ENCODE measurements at regions of chr1 and their contacts with region 1.

Region 1: GRCh38 chr1:108691942-108692723 is at the start of gene PRPF38B:
- DNase-seq: peak; percentile 92 to 95 (median 94)
- H3K4me3 ChIP-seq: peak within 1 kb of the TSS; percentile 97
- H3K4me3 Mint-ChIP-seq: peak within 1 kb of the TSS; percentile 91 to 100 (median 93)
- H3K27ac ChIP-seq: peak within 1 kb of the TSS; percentile 96
- H3K27ac Mint-ChIP-seq: peak within 1 kb of the TSS; percentile 91 to 100 (median 98)
- H3K4me1 ChIP-seq: peaks cover 40% of the 10 kb centered on the region
- H3K4me1 Mint-ChIP-seq: peaks cover 39 to 50% (median 45%) of the 10 kb centered on the region in 3 donors
- H3K27me3 ChIP-seq: no peaks in the 10 kb centered on the region
- H3K27me3 Mint-ChIP-seq: no peaks in the 10 kb centered on the region
- total RNA-seq, gene PRPF38B: 74.8 to 78.1 TPM

Region 2: GRCh38 chr1:108643492-108644335 is 48.4 kb before region 1 on chr1:
- CTCF ChIA-PET with region 1: interaction called, 134 read pairs
- POLR2A ChIA-PET with region 1: interaction called, 161 read pairs
- DNase-seq: peak; percentile 21 to 69 (median 59)
- H3K4me3 ChIP-seq: no peak overlapping the region
- H3K4me3 Mint-ChIP-seq: peak overlapping the region in 6 of 7 donors; percentile 2 to 92 (median 44)
- H3K27ac ChIP-seq: no peak overlapping the region
- H3K27ac Mint-ChIP-seq: peak overlapping the region; percentile 95 to 100 (median 98)
- H3K4me1 ChIP-seq: peaks cover 67% of the 10 kb centered on the region
- H3K4me1 Mint-ChIP-seq: peaks cover 73 to 83% (median 82%) of the 10 kb centered on the region in 3 donors
- H3K27me3 ChIP-seq: no peaks in the 10 kb centered on the region
- H3K27me3 Mint-ChIP-seq: no peaks in the 10 kb centered on the region

Region 3: DNA sequence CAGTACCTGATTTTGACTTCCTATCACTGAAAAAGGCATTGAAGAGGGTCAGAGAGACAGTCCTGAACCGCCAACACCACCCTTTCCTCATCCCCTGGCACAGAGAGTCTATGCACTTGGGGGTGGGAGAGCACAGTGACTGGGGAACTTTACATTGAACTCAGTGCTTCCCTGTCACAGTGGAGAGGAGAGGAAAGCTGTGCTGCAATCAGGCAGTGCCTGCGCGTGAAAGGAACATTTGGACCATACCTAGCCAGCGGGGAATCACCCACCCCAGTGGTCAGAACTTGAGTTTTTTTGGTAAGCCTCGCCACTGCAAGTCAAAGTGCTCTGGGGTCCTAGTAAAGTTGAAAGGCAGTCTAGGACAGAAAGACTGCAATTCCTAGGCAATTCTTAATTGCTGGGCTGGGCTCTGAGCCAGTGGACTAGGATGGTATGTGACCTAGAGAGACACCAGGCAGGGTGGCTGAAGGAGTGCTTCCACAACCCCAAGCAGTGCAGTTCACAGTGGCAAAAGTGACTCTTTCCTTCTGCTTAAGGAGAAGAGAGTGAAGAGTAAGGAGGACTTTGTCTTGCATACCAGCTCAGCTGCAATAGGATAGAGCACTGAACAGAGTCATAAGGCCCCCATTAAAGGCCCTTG is 21.9 kb before region 1 on chr1:
- CTCF ChIA-PET with region 1: interaction called, 14 read pairs
- POLR2A ChIA-PET with region 1: interaction called, 4 read pairs
- DNase-seq: no peak
- H3K4me3 ChIP-seq: no peak overlapping the region
- H3K4me3 Mint-ChIP-seq: no peak overlapping the region
- H3K27ac ChIP-seq: no peak overlapping the region
- H3K27ac Mint-ChIP-seq: no peak overlapping the region
- H3K4me1 ChIP-seq: no peaks in the 10 kb centered on the region
- H3K4me1 Mint-ChIP-seq: peaks cover 3 to 9% (median 8%) of the 10 kb centered on the region in 3 donors
- H3K27me3 ChIP-seq: no peaks in the 10 kb centered on the region
- H3K27me3 Mint-ChIP-seq: no peaks in the 10 kb centered on the region

Region 4: GRCh38 chr1:108732398-108732797 is 40.3 kb after region 1 on chr1:
- CTCF ChIA-PET with region 1: no interaction called
- POLR2A ChIA-PET with region 1: no interaction called
- DNase-seq: no peak
- H3K4me3 ChIP-seq: no peak overlapping the region
- H3K4me3 Mint-ChIP-seq: no peak overlapping the region
- H3K27ac ChIP-seq: no peak overlapping the region
- H3K27ac Mint-ChIP-seq: no peak overlapping the region
- H3K4me1 ChIP-seq: no peaks in the 10 kb centered on the region
- H3K4me1 Mint-ChIP-seq: no peaks in the 10 kb centered on the region
- H3K27me3 ChIP-seq: no peaks in the 10 kb centered on the region
- H3K27me3 Mint-ChIP-seq: peaks cover 0 to 27% of the 10 kb centered on the region in 2 donors

Region 5: GRCh38 chr1:108746372-108747205 is 54.5 kb after region 1 on chr1 and contains the start of gene STXBP3:
- CTCF ChIA-PET with region 1: interaction called, 5 read pairs
- POLR2A ChIA-PET with region 1: interaction called, 15 read pairs
- DNase-seq: peak; percentile 99 to 100 (median 100)
- H3K4me3 ChIP-seq: peak within 1 kb of the TSS; percentile 68
- H3K4me3 Mint-ChIP-seq: peak within 1 kb of the TSS; percentile 91 to 99 (median 93)
- H3K27ac ChIP-seq: peak within 1 kb of the TSS; percentile 87
- H3K27ac Mint-ChIP-seq: peak within 1 kb of the TSS; percentile 92 to 100 (median 99)
- H3K4me1 ChIP-seq: peaks cover 29% of the 10 kb centered on the region
- H3K4me1 Mint-ChIP-seq: peaks cover 35 to 46% (median 42%) of the 10 kb centered on the region in 3 donors
- H3K27me3 ChIP-seq: no peaks in the 10 kb centered on the region
- H3K27me3 Mint-ChIP-seq: peaks cover 0 to 5% of the 10 kb centered on the region in 2 donors
- total RNA-seq, gene STXBP3: 43.2 to 43.3 TPM

Region 6: DNA sequence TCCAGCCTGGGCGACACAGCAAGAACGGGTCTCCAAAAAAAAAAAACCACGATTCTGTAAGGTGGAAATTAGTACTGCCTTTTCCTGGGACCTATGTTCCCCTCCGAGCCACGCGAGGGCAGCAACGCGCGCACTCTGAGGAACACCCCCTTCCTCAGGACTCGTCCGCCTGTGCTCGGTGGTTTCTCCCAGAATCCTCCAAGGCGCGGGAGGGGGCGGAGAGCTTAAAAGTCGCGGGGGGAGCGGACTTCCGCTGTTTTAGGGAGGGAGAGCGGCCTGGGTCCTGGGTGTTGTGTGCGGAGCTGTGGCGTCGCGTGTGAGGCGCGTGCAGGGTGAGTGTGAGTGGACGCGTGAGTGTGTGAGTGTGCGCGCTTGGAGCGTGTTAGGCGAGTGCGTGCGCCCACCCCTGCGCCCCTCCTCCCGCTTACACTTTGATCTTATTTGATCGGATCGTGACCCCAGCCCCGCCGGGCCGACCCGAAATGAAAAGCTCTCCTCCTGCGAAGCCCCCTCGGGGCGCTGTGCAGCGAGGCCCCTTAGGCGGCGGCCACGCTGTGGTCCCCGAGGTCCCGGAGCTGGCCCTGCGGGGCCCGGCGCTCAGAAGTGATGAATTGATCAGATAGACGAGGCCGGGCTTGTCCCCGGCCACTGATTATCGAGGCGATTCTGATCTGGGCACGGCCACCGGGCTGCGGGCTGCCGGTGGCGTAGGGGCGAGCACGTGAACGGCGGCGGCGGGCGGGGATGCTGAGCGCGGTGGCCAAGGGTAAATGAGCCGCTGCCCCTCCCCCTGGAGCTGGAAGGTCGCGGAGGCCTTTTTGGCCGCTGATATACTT is 408.0 kb after region 1 on chr1:
- CTCF ChIA-PET with region 1: interaction called, 3 read pairs
- POLR2A ChIA-PET with region 1: interaction called, 14 read pairs
- DNase-seq: peak; percentile 94 to 98 (median 96)
- H3K4me3 ChIP-seq: peak overlapping the region; percentile 76
- H3K4me3 Mint-ChIP-seq: peak overlapping the region; percentile 94 to 99 (median 97)
- H3K27ac ChIP-seq: peak overlapping the region; percentile 91
- H3K27ac Mint-ChIP-seq: peak overlapping the region; percentile 92 to 99 (median 98)
- H3K4me1 ChIP-seq: peaks cover 8% of the 10 kb centered on the region
- H3K4me1 Mint-ChIP-seq: peaks cover 8 to 14% (median 12%) of the 10 kb centered on the region in 3 donors
- H3K27me3 ChIP-seq: no peaks in the 10 kb centered on the region
- H3K27me3 Mint-ChIP-seq: peaks cover 0 to 2% of the 10 kb centered on the region in 2 donors